ENCODE measurements at regions of chr18 and their contacts with region 1.

Region 1: GRCh38 chr18:8389391-8390340 is 219.6 kb upstream of the RAB12 start:
- DNase-seq: peak; percentile 77
- H3K4me3 Mint-ChIP-seq: no peak overlapping the region
- H3K27ac Mint-ChIP-seq: peak overlapping the region; percentile 10
- H3K4me1 Mint-ChIP-seq: no peaks in the 10 kb centered on the region
- H3K27me3 Mint-ChIP-seq: no peaks in the 10 kb centered on the region
- CTCF ChIP-seq: peak; percentile 87

Region 2: GRCh38 chr18:7566567-7567473 is 822.8 kb before region 1 on chr18 and contains the start of gene PTPRM:
- CTCF ChIA-PET with region 1: interaction called, 5 read pairs
- POLR2A ChIA-PET with region 1: interaction called, 3 read pairs
- intact Hi-C with region 1: loop called (anchors 1 kb)
- DNase-seq: peak; percentile 79
- H3K4me3 Mint-ChIP-seq: peak within 1 kb of the TSS; percentile 81
- H3K27ac Mint-ChIP-seq: peak within 1 kb of the TSS; percentile 59
- H3K4me1 Mint-ChIP-seq: peaks cover 35% of the 10 kb centered on the region
- H3K27me3 Mint-ChIP-seq: no peaks in the 10 kb centered on the region
- CTCF ChIP-seq: peak; percentile 45
- total RNA-seq, gene PTPRM: 82.8 and 107 TPM in 2 replicates

Region 3: DNA sequence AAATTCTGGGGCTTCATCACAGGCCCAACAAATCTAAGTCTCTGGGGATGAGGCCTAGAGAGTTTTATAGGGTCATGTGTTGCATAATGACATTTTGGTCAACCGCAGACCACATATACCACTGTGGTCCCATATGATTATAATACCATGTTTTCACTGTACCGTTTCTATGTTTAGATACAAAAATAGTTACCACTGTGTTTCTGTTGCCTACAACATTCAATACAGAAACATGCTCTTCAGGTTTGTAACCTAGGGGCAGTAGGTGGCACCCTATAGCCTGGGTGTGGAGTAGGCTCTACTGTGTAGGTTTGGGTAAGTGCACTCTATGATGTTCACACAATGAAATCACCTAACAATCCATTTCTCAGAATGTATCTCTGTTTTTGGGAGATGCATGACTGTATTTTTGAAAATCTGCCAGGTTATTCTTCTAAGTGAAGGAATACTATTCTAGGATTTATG is 337.4 kb before region 1 on chr18:
- CTCF ChIA-PET with region 1: no interaction called
- POLR2A ChIA-PET with region 1: no interaction called
- intact Hi-C with region 1: loop called (anchors 1 kb)
- DNase-seq: peak; percentile 20
- H3K4me3 Mint-ChIP-seq: no peak overlapping the region
- H3K27ac Mint-ChIP-seq: no peak overlapping the region
- H3K4me1 Mint-ChIP-seq: peaks cover 19% of the 10 kb centered on the region
- H3K27me3 Mint-ChIP-seq: no peaks in the 10 kb centered on the region
- CTCF ChIP-seq: no peak

Region 4: GRCh38 chr18:8373486-8373885 is 16.2 kb before region 1 on chr18:
- CTCF ChIA-PET with region 1: interaction called, 10 read pairs
- POLR2A ChIA-PET with region 1: interaction called, 5 read pairs
- intact Hi-C with region 1: no loop called
- DNase-seq: peak; percentile 82
- H3K4me3 Mint-ChIP-seq: no peak overlapping the region
- H3K27ac Mint-ChIP-seq: peak overlapping the region; percentile 43
- H3K4me1 Mint-ChIP-seq: peaks cover 16% of the 10 kb centered on the region
- H3K27me3 Mint-ChIP-seq: no peaks in the 10 kb centered on the region
- CTCF ChIP-seq: no peak

Region 5: DNA sequence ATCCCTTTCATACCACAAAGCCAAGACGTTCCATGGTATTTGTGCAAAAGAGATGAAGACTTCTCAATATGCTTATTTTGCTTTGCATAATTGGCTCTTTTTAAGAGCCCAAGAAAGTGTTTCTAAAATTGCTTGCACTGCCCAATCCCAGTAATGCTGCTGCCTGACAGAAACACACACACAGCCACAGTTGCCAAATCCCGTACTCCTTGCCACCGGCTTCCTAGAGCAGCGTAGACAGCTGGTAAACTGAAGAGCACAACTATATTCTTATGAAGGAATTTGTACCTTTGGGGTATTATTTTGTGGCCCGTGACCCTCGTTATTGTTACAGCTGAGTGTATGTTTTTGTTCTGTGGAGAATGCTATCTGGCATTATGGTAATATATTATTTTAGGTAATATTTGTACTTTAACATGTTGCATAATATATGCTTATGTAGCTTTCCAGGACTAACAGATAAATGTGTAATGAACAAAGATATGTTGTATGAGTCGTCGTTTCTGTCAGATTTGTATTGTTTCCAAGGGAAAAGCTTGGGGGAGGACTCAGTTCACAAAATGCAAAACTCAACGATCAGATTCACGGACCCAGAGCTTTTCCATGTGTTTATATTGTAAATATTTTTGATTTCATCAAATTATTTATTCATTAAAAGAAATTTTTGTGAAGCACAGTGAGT is 16.7 kb after region 1 on chr18:
- CTCF ChIA-PET with region 1: interaction called, 12 read pairs
- POLR2A ChIA-PET with region 1: no interaction called
- intact Hi-C with region 1: no loop called
- DNase-seq: no peak
- H3K4me3 Mint-ChIP-seq: no peak overlapping the region
- H3K27ac Mint-ChIP-seq: no peak overlapping the region
- H3K4me1 Mint-ChIP-seq: no peaks in the 10 kb centered on the region
- H3K27me3 Mint-ChIP-seq: no peaks in the 10 kb centered on the region
- CTCF ChIP-seq: no peak